ENCODE measurements at regions of chr1 and their contacts with region 1.

Region 1: GRCh38 chr1:39408641-39409054 is 82.8 kb upstream of the BMP8A start:
- DNase-seq: peak; percentile 96
- H3K4me3 Mint-ChIP-seq: peak overlapping the region; percentile 90
- H3K27ac Mint-ChIP-seq: no peak overlapping the region
- H3K4me1 Mint-ChIP-seq: peaks cover 50% of the 10 kb centered on the region
- H3K27me3 Mint-ChIP-seq: no peaks in the 10 kb centered on the region

Region 2: DNA sequence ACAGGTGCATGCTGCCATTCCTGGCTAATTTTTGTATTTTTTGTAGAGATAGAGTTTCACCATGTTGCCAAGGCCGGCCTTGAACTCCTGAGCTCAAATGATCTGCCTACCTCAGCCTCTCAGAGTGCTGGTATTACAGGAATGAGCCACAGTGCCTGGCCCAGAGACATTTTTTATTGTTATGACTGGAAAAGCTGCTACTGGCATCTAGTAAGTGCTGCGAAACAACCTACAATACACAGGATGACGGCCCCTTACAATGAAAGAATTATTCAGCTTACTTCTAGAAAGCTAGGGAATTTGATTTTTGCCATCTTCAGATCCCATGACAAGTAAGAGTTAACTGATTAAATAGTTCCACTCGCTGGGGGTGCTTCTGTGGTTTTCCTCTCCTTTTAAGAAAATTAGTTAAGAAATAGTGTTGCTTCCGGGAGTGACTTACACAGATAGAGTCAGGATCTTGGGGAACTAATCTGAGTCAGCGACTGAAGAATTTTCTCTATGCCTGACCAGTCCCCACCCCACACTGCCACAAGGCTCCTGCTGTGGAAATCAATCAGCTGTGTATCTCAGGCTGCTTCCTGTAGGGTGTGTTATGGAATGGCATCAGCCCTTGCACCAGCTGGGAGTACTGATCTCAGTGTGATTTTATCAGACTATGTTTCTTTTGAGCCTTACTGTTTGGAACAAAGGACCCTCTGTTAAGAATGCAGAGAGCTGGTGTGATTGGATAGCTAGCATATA is 10.2 kb before region 1 on chr1:
- intact Hi-C with region 1: loop called (anchors 1 kb)
- DNase-seq: peak; percentile 63
- H3K4me3 Mint-ChIP-seq: peak overlapping the region; percentile 41
- H3K27ac Mint-ChIP-seq: peak overlapping the region; percentile 82
- H3K4me1 Mint-ChIP-seq: peaks cover 53% of the 10 kb centered on the region
- H3K27me3 Mint-ChIP-seq: no peaks in the 10 kb centered on the region

Region 3: DNA sequence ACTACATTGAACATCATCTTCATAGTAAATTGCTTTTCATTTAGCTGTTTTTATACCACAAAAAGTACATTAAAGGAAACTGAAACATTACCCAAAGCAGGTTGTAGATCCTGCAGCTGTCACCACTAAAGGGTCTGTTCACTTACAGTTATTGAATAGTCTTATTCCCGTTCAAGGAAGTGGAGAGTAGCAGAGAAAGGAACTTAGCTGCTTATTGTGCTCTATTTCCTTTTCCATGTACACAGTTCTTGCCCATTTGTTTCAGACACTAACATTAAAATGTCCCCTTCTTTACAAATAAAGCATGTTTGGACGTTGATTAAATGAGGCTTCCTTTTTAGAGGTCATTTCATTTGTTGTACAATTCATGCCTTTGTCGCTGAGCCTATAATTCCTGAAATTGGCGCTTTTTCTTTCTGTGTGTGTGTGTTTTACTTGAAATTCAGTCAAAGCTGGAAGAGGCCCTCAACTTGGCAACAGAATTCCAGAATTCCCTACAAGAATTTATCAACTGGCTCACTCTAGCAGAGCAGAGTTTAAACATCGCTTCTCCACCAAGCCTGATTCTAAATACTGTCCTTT is 38.4 kb after region 1 on chr1:
- intact Hi-C with region 1: no loop called
- DNase-seq: no peak
- H3K4me3 Mint-ChIP-seq: no peak overlapping the region
- H3K27ac Mint-ChIP-seq: no peak overlapping the region
- H3K4me1 Mint-ChIP-seq: peaks cover 10% of the 10 kb centered on the region
- H3K27me3 Mint-ChIP-seq: no peaks in the 10 kb centered on the region